ENCODE measurements at regions of chr16 and their contacts with region 1.

Region 1: DNA sequence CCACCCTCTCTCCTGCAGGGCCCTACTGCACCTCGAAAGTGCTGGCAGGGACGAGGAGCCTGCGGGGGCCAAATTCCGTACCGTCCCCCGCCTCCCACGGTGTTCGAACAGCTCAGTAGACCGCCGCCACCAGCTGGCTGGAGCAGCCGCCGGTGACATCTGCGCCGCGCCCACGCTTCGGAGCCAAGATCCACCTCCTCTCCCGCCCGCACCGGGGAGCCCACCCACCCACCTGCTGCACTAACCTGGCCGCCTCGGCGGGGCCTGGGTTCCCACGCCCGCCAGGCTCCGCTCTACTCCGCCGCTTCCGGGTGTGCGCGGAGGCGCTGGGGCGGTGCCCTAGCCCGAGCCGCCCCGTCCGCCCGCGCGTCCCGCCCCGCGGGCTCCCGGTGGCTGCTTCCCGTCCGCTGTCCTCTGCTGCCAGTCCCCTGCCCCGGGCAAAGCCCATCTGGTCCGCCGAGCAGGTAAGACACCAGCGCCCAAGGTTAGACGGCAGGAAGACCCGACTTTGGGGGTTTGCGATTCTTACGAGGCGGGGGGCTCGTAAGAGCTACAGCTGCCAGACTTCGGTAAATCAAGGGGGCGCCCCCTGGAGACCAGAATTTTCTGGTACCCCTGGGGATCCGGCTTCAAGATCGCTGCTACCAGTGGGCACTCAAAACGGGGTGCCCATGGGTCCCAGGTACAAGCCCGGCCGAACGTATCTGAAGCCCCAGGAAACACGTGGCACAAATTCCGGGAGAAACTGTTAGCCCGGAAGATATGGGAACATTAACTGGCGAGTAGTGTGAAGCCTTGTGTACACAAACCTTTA is at the starts of genes FBXL8 and TRADD:
- ATAC-seq: peak in 7 of 8 experiments; percentile 3 to 71 (median 16)
- H3K4me3 ChIP-seq: peak within 1 kb of the TSS; percentile 33 to 52 (median 43)
- H3K27ac ChIP-seq: no peak within 1 kb of the TSS
- H3K4me1 ChIP-seq: peaks cover 3 to 24% of the 10 kb centered on the region in 2 donors
- total RNA-seq, gene FBXL8: 1.0 to 44.5 (median 9.0) TPM
- total RNA-seq, gene TRADD: 0.42 to 18.0 (median 6.6) TPM

Region 2: DNA sequence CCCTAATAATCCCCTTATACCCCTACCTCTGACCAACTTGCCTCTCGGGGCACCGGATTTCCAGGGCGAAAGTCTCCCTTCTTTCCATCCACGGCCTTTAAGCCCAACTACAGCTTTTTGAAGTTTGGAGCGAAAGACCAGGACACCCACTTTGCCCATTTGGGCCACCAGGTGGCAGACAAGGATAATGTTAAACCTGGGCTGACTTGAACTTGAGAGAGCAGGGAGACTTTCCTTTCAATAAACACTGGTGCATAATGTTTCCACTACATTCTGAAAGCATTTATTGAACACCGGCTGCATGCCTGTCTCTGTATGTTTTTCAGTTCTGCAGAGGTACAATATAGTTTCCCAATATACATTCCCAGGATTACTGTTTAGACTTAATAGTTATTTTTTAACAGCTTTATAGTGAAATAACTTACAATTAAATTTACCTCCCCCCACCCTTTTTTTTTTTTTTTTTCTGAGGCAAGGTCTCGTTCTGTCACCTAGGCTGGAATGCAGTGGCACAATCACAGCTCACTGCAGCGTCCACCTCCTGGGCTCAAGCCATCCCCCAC is 205.6 kb before region 1 on chr16:
- in situ Hi-C with region 1: loop called in 8 of 9 experiments (anchors 10 to 25 kb)
- ATAC-seq: peak; percentile 60 to 94 (median 79)
- H3K4me3 ChIP-seq: no peak overlapping the region
- H3K27ac ChIP-seq: no peak overlapping the region
- H3K4me1 ChIP-seq: peaks cover 0 to under 1% of the 10 kb centered on the region in 2 donors

Region 3: DNA sequence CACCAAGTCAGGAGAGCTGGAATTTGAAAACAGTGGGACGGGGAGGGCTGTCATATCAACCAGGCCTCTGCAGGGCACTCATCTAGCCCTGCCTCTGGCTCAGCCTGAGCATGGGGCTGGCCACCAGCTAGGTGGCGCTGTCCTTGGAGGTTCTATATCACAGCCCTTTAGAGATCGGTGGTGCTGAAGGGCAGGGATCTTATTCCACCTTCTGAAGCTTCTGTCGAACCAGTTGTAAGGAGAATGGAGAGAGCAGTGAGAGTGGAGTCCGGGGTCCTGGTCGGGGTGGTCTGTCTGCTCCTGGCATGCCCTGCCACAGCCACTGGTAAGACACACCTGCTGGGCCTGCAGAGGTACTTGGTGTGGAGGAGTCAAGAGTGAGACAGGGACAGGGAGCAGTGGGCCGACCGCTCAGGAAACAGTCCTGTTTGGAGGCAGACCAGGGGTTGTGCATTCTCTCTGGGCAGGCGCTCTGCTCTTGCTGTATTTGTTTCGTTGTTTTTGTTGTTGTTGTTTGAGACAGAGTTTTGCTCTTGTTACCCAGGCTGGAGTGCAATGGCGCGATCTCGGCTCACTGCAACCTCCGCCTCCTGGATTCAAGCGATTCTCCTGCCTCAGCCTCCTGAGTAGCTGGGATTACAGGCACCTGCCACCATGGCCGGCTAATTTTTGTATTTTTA is 198.6 kb before region 1 on chr16 and contains the start of gene CES3:
- in situ Hi-C with region 1: loop called in 8 of 9 experiments (anchors 10 to 25 kb)
- ATAC-seq: peak; percentile 77 to 100 (median 97)
- H3K4me3 ChIP-seq: no peak within 1 kb of the TSS
- H3K27ac ChIP-seq: no peak within 1 kb of the TSS
- H3K4me1 ChIP-seq: no peaks in the 10 kb centered on the region
- total RNA-seq, gene CES3: 0.09 to 1.9 (median 0.53) TPM

Region 4: DNA sequence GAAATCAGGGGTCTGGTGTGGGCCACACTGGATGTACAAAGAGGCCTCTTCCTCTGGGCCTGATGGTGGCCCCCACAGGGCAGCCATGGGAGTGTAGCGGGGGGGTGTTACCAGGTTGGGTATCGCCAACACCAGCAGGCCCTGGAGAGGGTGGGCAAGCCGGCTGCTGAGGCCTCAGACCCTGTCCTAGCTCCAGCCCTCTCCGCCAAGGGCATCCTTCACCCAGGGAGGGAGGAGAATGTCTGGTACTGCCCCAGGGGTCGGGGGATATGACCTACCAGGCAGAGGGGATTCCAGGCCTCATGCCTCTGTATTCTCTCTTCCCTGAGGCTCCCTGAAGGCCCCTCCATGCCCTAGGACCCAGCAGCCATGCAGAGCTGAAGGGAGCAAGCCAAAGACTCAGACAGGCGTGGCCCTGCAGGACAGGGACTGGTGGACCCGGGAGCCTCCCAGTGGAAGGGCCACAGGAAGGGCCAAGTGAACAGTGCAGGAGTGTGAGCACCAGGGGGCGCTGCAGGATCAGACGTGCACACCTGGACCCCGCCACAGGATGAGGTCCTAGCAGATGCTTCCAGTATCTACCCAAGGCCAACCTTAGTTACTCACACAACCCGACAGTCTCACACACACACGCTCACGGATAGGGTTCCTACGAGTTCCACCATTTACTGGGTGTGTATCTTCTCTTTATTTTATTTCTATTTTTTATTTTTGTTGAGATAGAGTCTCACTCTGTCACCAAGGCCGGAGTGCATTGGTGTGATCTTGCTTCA is 182.3 kb before region 1 on chr16:
- in situ Hi-C with region 1: loop called in 8 of 9 experiments (anchors 25 kb)
- ATAC-seq: peak; percentile 69 to 99 (median 92)
- H3K4me3 ChIP-seq: no peak overlapping the region
- H3K27ac ChIP-seq: no peak overlapping the region
- H3K4me1 ChIP-seq: peaks cover 0 to 9% of the 10 kb centered on the region in 2 donors

Region 5: GRCh38 chr16:67364600-67365235 is 204.9 kb after region 1 on chr16:
- in situ Hi-C with region 1: no loop called
- ATAC-seq: no peak
- H3K4me3 ChIP-seq: no peak overlapping the region
- H3K27ac ChIP-seq: no peak overlapping the region
- H3K4me1 ChIP-seq: peaks cover 0 to 11% of the 10 kb centered on the region in 2 donors